Activated B cell treated with CpG ODN at 0.5 μM for 24 hours (primary cell): ENCODE measurements at regions of chr11 and their contacts with region 1.

Region 1: DNA sequence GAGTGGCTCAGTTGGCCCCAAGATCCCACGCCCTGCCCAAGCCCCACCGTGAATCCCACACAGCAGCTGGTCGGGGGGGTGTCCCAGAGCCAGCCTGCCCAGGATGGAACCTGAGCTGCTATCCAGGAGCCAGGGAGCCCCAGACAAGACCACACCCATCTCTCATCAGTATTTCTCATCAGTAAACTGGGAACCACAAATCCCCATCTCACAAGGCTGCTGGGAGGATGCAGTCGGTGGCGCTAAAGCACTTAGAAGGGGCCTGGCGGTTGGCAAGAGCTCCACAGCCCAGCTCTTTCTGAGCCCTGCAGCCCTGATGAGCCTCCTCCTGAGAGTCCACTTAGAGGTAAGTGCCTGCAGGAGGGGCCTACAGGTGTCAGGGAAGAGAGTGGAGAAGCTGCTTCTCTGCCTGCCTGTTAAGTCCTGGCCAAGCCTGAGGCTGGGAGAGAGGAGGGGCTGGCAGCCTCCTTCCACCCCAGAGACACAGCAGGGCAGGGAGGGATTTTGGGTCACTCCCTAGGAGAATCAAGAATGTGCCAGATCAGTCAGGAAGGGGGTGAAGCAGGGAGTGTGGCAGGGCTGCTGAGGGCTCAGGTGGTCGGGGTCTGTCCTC is 6.1 kb downstream of the FADS3 start:
- DNase-seq: no peak
- ATAC-seq: no peak
- H3K4me3 Mint-ChIP-seq: no peak overlapping the region
- H3K27ac Mint-ChIP-seq: no peak overlapping the region
- H3K4me1 Mint-ChIP-seq: peaks cover 54% of the 10 kb centered on the region
- H3K27me3 Mint-ChIP-seq: no peaks in the 10 kb centered on the region
- CTCF ChIP-seq: no peak

Region 2: GRCh38 chr11:61899146-61899841 is 14.0 kb after region 1 on chr11:
- CTCF ChIA-PET with region 1: interaction called, 67 read pairs
- POLR2A ChIA-PET with region 1: interaction called, 11 read pairs
- intact Hi-C with region 1: loop called (anchors 2 kb)
- DNase-seq: peak; percentile 97
- ATAC-seq: peak; percentile 99
- H3K4me3 Mint-ChIP-seq: no peak overlapping the region
- H3K27ac Mint-ChIP-seq: peak overlapping the region; percentile 50
- H3K4me1 Mint-ChIP-seq: peaks cover 22% of the 10 kb centered on the region
- H3K27me3 Mint-ChIP-seq: no peaks in the 10 kb centered on the region
- CTCF ChIP-seq: peak; percentile 90

Region 3: GRCh38 chr11:61923166-61924063 is 38.1 kb after region 1 on chr11:
- CTCF ChIA-PET with region 1: no interaction called
- POLR2A ChIA-PET with region 1: no interaction called
- intact Hi-C with region 1: no loop called
- DNase-seq: no peak
- ATAC-seq: no peak
- H3K4me3 Mint-ChIP-seq: no peak overlapping the region
- H3K27ac Mint-ChIP-seq: no peak overlapping the region
- H3K4me1 Mint-ChIP-seq: peaks cover 5% of the 10 kb centered on the region
- H3K27me3 Mint-ChIP-seq: peaks cover 22% of the 10 kb centered on the region
- CTCF ChIP-seq: no peak

Region 4: DNA sequence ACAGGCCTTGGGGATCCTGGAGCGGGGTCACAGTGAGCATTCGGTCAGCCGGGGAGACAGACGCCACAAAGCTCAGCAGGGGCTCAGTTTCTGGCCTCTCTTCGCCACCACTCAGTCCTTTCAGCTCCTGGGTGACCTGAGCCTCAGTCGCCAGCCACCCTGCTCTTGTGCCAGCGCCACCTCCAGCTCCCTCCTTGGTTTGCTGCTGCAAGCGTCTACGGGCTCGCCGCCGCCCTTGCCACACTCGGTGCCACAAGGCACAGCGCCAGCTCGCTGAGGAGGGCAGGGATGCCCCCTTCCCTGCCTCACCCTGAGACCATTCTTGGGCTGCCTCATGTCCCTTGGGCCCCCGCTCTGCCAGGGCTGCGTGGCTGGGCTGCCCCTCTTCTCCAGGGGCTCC is 689.9 kb after region 1 on chr11:
- CTCF ChIA-PET with region 1: no interaction called
- POLR2A ChIA-PET with region 1: no interaction called
- intact Hi-C with region 1: no loop called
- DNase-seq: no peak
- ATAC-seq: no peak
- H3K4me3 Mint-ChIP-seq: peak overlapping the region; percentile 97
- H3K27ac Mint-ChIP-seq: no peak overlapping the region
- H3K4me1 Mint-ChIP-seq: peaks cover 46% of the 10 kb centered on the region
- H3K27me3 Mint-ChIP-seq: no peaks in the 10 kb centered on the region
- CTCF ChIP-seq: no peak